ENCODE measurements at regions of chr17 and their contacts with region 1.

Region 1: DNA sequence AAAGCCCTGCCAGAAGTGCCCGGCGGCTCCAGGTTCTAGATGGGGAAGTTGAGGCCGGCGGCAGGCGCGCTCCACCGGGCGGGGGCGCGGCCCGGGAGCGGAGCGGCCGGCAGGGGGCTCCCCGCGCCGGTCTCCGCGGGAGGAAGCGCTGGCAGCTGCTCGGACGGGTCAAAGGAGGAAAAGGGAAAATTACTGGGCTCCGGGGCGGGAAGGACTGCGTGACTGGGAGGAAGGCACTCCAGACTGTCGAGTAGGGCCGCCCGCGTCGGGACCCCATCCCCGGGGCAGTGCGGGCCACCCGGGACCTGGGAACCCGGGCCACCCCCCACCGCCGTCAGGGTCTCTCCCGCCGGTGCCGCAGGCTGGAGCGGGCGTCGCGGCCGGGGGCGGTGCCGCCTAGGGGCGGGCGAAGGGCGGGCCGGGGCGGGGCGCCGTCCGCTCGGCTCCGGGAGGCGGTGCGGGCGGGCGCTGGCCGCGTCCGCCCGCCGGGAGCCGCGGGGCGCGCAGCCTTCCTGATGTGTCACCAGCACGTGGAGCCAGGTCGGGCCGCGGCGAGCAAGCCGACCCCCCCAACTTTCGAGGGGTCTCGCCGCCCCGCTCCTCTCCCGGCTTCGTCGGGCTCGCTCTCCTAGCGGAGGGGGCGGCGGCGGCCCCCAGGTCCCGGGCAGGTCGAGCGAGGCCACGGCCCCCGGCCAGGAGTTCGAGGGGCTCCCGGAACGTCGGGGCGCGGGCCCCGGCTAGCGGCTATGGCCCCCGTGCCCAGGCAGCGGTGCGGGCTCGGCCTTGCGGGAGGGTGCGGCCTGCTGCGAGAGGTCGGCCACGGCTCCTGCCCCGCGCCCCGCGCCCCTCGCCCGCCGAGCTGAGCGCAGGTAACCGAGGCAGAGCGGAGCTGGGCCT is 167.5 kb downstream of the RAB11FIP4 start:
- DNase-seq: no peak
- H3K4me3 ChIP-seq: peak overlapping the region; percentile 94
- H3K27me3 ChIP-seq: no peaks in the 10 kb centered on the region
- CTCF ChIP-seq: peak; percentile 51

Region 2: GRCh38 chr17:31834448-31834847 is 275.5 kb after region 1 on chr17:
- CTCF ChIA-PET with region 1: interaction called, 14 read pairs
- POLR2A ChIA-PET with region 1: no interaction called
- DNase-seq: no peak
- H3K4me3 ChIP-seq: no peak overlapping the region
- H3K27me3 ChIP-seq: no peaks in the 10 kb centered on the region
- CTCF ChIP-seq: no peak

Region 3: GRCh38 chr17:31857920-31858641 is 299.1 kb after region 1 on chr17:
- CTCF ChIA-PET with region 1: interaction called, 12 read pairs
- POLR2A ChIA-PET with region 1: no interaction called
- DNase-seq: no peak
- H3K4me3 ChIP-seq: peak overlapping the region; percentile 51
- H3K27me3 ChIP-seq: no peaks in the 10 kb centered on the region
- CTCF ChIP-seq: no peak

Measured in BJ (cell line).